Caco-2 (cell line): ENCODE measurements at regions of chr3 and their contacts with region 1.

Region 1: GRCh38 chr3:10248184-10249080 is at the start of gene TATDN2:
- DNase-seq: peak; percentile 95 to 97
- H3K4me3 ChIP-seq: peak within 1 kb of the TSS; percentile 76
- H3K4me3 Mint-ChIP-seq: peak within 1 kb of the TSS; percentile 92
- H3K27ac Mint-ChIP-seq: peak within 1 kb of the TSS; percentile 92
- H3K4me1 ChIP-seq: peaks cover 12% of the 10 kb centered on the region; the same call in 1 of the 2 replicates
- H3K4me1 Mint-ChIP-seq: peaks cover 5% of the 10 kb centered on the region
- H3K27me3 ChIP-seq: no peaks in the 10 kb centered on the region
- H3K27me3 Mint-ChIP-seq: no peaks in the 10 kb centered on the region
- CTCF ChIP-seq: no peak
- total RNA-seq, gene TATDN2: 29.3 and 32.1 TPM in 2 replicates

Region 2: DNA sequence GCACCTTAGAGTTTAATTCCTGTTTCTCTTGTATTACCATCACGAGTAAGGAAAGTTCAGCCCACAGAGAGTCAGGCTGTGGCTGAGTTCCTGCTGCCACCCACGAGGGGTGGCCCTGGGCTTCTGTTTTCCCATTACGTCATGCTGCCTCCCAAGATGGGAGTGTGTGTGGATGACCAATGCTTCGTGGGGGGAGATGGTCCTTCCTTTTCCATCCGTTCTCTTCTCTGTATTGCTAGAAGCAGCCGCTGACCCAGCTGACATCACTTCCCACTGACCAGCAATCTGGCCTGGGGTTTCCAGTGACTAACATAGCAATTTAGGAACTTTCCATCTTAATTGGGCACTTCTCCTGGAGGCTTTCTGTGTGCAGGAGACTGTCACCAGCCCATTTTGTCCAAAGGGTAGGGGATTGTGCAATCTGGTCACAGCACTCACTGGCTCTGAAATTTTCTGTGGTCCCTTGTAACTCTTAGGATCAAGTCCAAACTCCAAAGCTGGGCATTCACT is 74.5 kb before region 1 on chr3:
- CTCF ChIA-PET with region 1: no interaction called
- POLR2A ChIA-PET with region 1: no interaction called
- intact Hi-C with region 1: no loop called
- DNase-seq: no peak
- H3K4me3 ChIP-seq: no peak overlapping the region
- H3K4me3 Mint-ChIP-seq: no peak overlapping the region
- H3K27ac Mint-ChIP-seq: no peak overlapping the region
- H3K4me1 ChIP-seq: no peaks in the 10 kb centered on the region; the same call in 1 of the 2 replicates
- H3K4me1 Mint-ChIP-seq: no peaks in the 10 kb centered on the region
- H3K27me3 ChIP-seq: no peaks in the 10 kb centered on the region
- H3K27me3 Mint-ChIP-seq: no peaks in the 10 kb centered on the region
- CTCF ChIP-seq: no peak

Region 3: GRCh38 chr3:10198761-10199649 is 49.4 kb before region 1 on chr3:
- CTCF ChIA-PET with region 1: interaction called, 3 read pairs
- POLR2A ChIA-PET with region 1: interaction called, 10 read pairs
- intact Hi-C with region 1: loop called (anchors 1 kb)
- DNase-seq: no peak
- H3K4me3 ChIP-seq: no peak overlapping the region
- H3K4me3 Mint-ChIP-seq: no peak overlapping the region
- H3K27ac Mint-ChIP-seq: peak overlapping the region; percentile 73
- H3K4me1 ChIP-seq: peaks cover 44% of the 10 kb centered on the region
- H3K4me1 Mint-ChIP-seq: peaks cover 31% of the 10 kb centered on the region
- H3K27me3 ChIP-seq: no peaks in the 10 kb centered on the region
- H3K27me3 Mint-ChIP-seq: no peaks in the 10 kb centered on the region
- CTCF ChIP-seq: no peak

Region 4: DNA sequence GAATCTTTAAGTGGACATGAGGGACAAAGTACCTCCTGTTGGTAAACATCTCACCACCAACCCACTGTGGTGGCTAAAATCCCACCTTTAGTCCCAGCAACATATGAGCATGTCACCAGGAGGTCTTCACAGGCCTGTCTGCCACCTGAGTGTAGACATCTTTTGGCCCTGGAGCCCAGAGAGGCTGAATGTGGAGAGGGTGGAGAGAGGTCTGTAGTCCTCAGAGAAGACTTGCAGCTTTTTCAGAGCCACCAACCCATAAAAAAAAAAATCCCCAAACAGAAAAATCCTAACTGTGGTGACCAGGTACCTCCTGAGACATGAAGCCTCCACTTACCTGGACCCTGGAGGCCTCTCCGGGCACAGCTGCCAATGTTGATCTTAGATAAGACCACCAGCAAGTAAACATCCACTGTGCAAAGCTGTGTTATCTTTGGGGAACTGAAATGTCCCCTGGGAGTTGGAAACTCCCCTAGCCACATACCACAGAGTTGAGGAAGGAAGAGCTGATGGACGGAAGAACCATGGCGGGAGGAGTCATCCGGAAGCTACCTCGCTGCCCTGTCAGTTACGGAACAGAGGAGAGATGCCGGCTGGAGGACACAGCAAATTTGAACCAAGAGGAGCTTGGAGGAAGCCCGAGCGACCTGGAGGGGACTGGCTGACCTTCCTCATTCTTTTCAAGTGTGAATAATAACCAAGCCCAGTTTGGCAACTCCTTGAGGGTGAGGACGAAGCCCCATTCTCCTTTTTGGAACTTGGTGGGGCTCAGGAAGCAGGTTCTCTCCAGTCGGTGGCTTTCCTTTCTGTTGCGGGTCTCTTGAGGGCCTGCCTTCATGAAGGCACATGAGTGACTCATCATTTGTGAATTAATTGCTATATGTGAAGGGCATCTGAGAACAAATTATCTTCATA is 44.3 kb after region 1 on chr3 and contains the start of gene GHRL:
- CTCF ChIA-PET with region 1: interaction called, 4 read pairs
- POLR2A ChIA-PET with region 1: interaction called, 8 read pairs
- intact Hi-C with region 1: loop called (anchors 5 kb)
- DNase-seq: peak; percentile 71 to 86
- H3K4me3 ChIP-seq: peak within 1 kb of the TSS; percentile 23
- H3K4me3 Mint-ChIP-seq: peak within 1 kb of the TSS; percentile 66
- H3K27ac Mint-ChIP-seq: peak within 1 kb of the TSS; percentile 90
- H3K4me1 ChIP-seq: peaks cover 26% of the 10 kb centered on the region
- H3K4me1 Mint-ChIP-seq: peaks cover 17% of the 10 kb centered on the region
- H3K27me3 ChIP-seq: no peaks in the 10 kb centered on the region
- H3K27me3 Mint-ChIP-seq: no peaks in the 10 kb centered on the region
- CTCF ChIP-seq: no peak
- total RNA-seq, gene GHRL: not detected in 2 replicates

Region 5: GRCh38 chr3:10426346-10427220 is 178.2 kb after region 1 on chr3:
- CTCF ChIA-PET with region 1: no interaction called
- POLR2A ChIA-PET with region 1: no interaction called
- intact Hi-C with region 1: no loop called
- DNase-seq: peak in 1 of 2 experiments; percentile 16
- H3K4me3 ChIP-seq: no peak overlapping the region
- H3K4me3 Mint-ChIP-seq: no peak overlapping the region
- H3K27ac Mint-ChIP-seq: no peak overlapping the region
- H3K4me1 ChIP-seq: no peaks in the 10 kb centered on the region
- H3K4me1 Mint-ChIP-seq: no peaks in the 10 kb centered on the region
- H3K27me3 ChIP-seq: no peaks in the 10 kb centered on the region; the same call in 1 of the 2 replicates
- H3K27me3 Mint-ChIP-seq: peaks cover 23% of the 10 kb centered on the region
- CTCF ChIP-seq: no peak